Lower leg skin (tissue), 4 donors: ENCODE measurements at regions of chr1 and their contacts with region 1.

Region 1: GRCh38 chr1:24691051-24691450 is 47.9 kb downstream of the SRRM1 start:
- DNase-seq: no peak
- H3K4me3 ChIP-seq: no peak overlapping the region
- CTCF ChIP-seq: no peak
- POLR2A ChIP-seq: no peak

Region 2: GRCh38 chr1:24558902-24559791 is 131.9 kb before region 1 on chr1:
- intact Hi-C with region 1: no loop called
- DNase-seq: peak; percentile 45 to 87
- H3K4me3 ChIP-seq: no peak overlapping the region
- CTCF ChIP-seq: no peak
- POLR2A ChIP-seq: no peak

Region 3: GRCh38 chr1:24594154-24594553 is 96.9 kb before region 1 on chr1:
- intact Hi-C with region 1: no loop called
- DNase-seq: no peak
- H3K4me3 ChIP-seq: no peak overlapping the region
- CTCF ChIP-seq: no peak
- POLR2A ChIP-seq: no peak

Region 4: DNA sequence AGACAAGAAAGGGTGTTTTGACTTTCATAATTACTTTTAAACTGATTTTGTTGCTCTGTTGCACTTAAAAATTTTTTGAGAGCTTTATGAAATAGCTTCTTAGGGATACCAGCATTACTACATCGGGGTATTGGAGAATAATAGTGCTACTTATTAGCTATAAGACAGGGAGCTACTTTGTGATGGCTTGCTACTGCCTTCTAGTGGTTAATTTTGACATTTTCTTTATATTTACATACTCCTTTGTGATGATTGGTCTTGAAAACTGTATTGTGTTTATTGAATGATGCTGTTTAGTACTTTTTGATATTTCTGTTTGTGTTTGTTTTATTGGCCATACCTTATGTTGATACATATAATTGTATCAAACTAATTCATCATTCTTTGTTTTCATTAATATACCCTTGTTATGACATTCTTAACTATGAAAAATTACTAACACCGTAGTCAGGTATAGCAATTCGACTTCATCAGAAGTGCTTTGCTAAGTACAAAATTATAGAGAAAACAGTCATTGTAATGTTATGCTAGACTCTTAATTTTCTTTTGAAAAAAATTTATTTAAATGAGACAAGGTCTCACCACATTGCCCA is 139.7 kb after region 1 on chr1:
- intact Hi-C with region 1: loop called (anchors 2 kb)
- DNase-seq: no peak
- H3K4me3 ChIP-seq: no peak overlapping the region
- CTCF ChIP-seq: peak in 1 of 3 donors; percentile 53
- POLR2A ChIP-seq: no peak